ENCODE measurements at regions of chr12 and their contacts with region 1.

Region 1: GRCh38 chr12:76348079-76348901 is at the start of gene BBS10:
- DNase-seq: peak; percentile 90
- H3K4me3 ChIP-seq: peak within 1 kb of the TSS; percentile 27 to 86 (median 82)
- H3K27ac ChIP-seq: peak within 1 kb of the TSS; percentile 44
- H3K4me1 ChIP-seq: peaks cover 18% of the 10 kb centered on the region
- H3K27me3 ChIP-seq: no peaks in the 10 kb centered on the region
- CTCF ChIP-seq: peak; percentile 24 to 66
- POLR2A ChIP-seq: peak; percentile 81
- total RNA-seq, gene BBS10: 7.5 and 7.8 TPM in 2 replicates

Region 2: GRCh38 chr12:75511116-75512048 is 836.9 kb before region 1 on chr12 and contains the start of gene KRR1:
- CTCF ChIA-PET with region 1: interaction called, 4 read pairs
- POLR2A ChIA-PET with region 1: no interaction called
- dilution Hi-C with region 1: no loop called
- intact Hi-C with region 1: loop called (anchors 5 kb)
- DNase-seq: peak; percentile 99
- H3K4me3 ChIP-seq: peak within 1 kb of the TSS; percentile 91 to 98 (median 93)
- H3K27ac ChIP-seq: peak within 1 kb of the TSS; percentile 91
- H3K4me1 ChIP-seq: peaks cover 12% of the 10 kb centered on the region
- H3K27me3 ChIP-seq: no peaks in the 10 kb centered on the region
- CTCF ChIP-seq: no peak
- POLR2A ChIP-seq: peak; percentile 66
- total RNA-seq, gene KRR1: 49.3 and 53.4 TPM in 2 replicates

Region 3: GRCh38 chr12:76055393-76055792 is 292.9 kb before region 1 on chr12:
- CTCF ChIA-PET with region 1: no interaction called
- POLR2A ChIA-PET with region 1: no interaction called
- dilution Hi-C with region 1: no loop called
- intact Hi-C with region 1: loop called (anchors 5 kb)
- DNase-seq: no peak
- H3K4me3 ChIP-seq: no peak overlapping the region
- H3K27ac ChIP-seq: no peak overlapping the region
- H3K4me1 ChIP-seq: no peaks in the 10 kb centered on the region
- H3K27me3 ChIP-seq: no peaks in the 10 kb centered on the region
- CTCF ChIP-seq: no peak
- POLR2A ChIP-seq: no peak

Region 4: DNA sequence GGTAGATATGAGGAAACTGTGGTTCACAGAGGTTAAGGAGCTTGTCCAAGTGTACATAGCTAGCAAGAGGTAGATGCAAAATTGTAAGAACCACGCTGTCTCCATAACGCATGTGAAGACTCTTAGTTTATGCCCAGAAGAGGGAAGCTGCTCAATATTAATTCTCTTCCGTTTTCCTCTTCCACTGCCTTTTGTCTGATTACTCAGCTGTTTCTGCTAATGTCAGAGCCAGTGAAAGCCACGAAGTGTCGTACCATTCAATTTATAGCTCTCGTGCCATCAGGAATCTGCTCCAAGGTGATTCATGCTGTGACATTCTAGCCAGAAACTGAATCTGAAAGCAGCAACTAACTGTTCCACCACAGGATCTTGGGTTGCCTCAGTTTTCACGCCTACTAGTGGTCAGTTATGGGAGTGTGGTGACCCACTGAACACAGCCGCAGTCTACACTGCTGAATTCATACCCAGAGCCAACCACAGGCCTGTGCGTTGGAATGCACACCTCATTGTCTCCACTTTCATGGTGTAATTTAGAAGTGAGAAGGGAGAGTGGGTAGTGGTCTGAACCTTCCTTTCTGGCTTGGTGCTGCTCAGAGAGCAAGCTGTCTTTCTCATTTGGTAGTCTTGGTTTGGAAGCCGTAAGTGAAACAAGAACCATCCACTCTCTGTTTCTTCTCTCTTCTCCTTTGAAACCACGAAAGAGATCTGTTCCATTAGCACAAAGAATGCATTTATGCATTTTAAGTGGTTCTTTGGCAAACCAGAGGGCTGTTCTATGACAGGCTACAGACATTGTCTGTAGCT is 189.6 kb before region 1 on chr12:
- CTCF ChIA-PET with region 1: interaction called, 23 read pairs
- POLR2A ChIA-PET with region 1: no interaction called
- dilution Hi-C with region 1: no loop called
- intact Hi-C with region 1: loop called (anchors 1 kb)
- DNase-seq: peak; percentile 78
- H3K4me3 ChIP-seq: no peak overlapping the region
- H3K27ac ChIP-seq: no peak overlapping the region
- H3K4me1 ChIP-seq: peaks cover 4% of the 10 kb centered on the region
- H3K27me3 ChIP-seq: no peaks in the 10 kb centered on the region
- CTCF ChIP-seq: peak; percentile 74 to 77
- POLR2A ChIP-seq: no peak

Region 5: GRCh38 chr12:76277480-76277879 is 70.8 kb before region 1 on chr12:
- CTCF ChIA-PET with region 1: interaction called, 14 read pairs
- POLR2A ChIA-PET with region 1: no interaction called
- dilution Hi-C with region 1: no loop called
- intact Hi-C with region 1: no loop called
- DNase-seq: peak; percentile 54
- H3K4me3 ChIP-seq: no peak overlapping the region
- H3K27ac ChIP-seq: peak overlapping the region; percentile 87
- H3K4me1 ChIP-seq: peaks cover 45% of the 10 kb centered on the region
- H3K27me3 ChIP-seq: no peaks in the 10 kb centered on the region
- CTCF ChIP-seq: no peak
- POLR2A ChIP-seq: no peak

Region 6: GRCh38 chr12:76470028-76470939 is 122.0 kb after region 1 on chr12:
- CTCF ChIA-PET with region 1: no interaction called
- POLR2A ChIA-PET with region 1: no interaction called
- dilution Hi-C with region 1: no loop called
- intact Hi-C with region 1: no loop called
- DNase-seq: peak; percentile 68
- H3K4me3 ChIP-seq: no peak overlapping the region
- H3K27ac ChIP-seq: no peak overlapping the region
- H3K4me1 ChIP-seq: peaks cover 8% of the 10 kb centered on the region
- H3K27me3 ChIP-seq: no peaks in the 10 kb centered on the region
- CTCF ChIP-seq: no peak
- POLR2A ChIP-seq: no peak

Region 7: DNA sequence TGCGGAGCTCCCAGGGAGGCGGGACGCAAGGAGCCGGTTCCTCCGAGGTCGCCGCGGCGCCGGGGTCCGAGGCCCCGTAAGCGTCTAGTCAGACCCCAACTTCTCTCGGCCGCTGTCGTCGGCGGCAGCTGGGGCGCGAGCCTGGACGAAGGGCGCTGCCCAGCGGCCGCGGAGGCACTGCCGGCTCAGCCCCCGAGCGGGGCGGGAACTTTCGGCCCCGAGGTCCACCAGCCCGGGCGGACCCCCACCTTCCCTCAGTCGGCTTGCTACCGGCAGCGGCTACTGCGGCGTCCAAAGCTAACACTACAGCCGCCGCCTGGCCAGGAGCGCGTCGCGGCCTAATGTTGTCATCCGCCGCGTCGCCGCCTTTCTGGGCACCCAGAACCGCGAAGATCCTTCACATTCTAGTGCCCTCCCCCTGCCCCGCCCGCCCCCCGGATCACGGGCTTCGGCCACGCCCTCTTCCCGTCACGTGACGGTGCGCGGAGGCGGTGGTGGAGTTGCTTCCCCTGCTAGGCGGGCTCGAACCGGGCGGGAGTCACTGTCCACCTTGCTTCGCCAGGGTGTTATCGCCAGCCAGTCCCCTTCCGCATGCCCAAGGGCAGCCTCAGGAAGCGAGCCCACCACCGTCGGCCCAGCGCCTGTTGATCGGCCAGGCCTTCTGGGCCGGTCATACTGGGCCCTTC is 211.3 kb after region 1 on chr12 and contains the start of gene OSBPL8:
- CTCF ChIA-PET with region 1: interaction called, 3 read pairs
- POLR2A ChIA-PET with region 1: no interaction called
- dilution Hi-C with region 1: no loop called
- intact Hi-C with region 1: loop called (anchors 1 kb)
- DNase-seq: peak; percentile 95
- H3K4me3 ChIP-seq: peak within 1 kb of the TSS; percentile 83 to 95 (median 88)
- H3K27ac ChIP-seq: peak within 1 kb of the TSS; percentile 84
- H3K4me1 ChIP-seq: peaks cover 27% of the 10 kb centered on the region
- H3K27me3 ChIP-seq: no peaks in the 10 kb centered on the region
- CTCF ChIP-seq: no peak
- POLR2A ChIP-seq: peak; percentile 91
- total RNA-seq, gene OSBPL8: 47.6 and 53.9 TPM in 2 replicates

Measured in endothelial cell of umbilical vein (primary cell).